ENCODE measurements at regions of chr2 and their contacts with region 1.

Region 1: DNA sequence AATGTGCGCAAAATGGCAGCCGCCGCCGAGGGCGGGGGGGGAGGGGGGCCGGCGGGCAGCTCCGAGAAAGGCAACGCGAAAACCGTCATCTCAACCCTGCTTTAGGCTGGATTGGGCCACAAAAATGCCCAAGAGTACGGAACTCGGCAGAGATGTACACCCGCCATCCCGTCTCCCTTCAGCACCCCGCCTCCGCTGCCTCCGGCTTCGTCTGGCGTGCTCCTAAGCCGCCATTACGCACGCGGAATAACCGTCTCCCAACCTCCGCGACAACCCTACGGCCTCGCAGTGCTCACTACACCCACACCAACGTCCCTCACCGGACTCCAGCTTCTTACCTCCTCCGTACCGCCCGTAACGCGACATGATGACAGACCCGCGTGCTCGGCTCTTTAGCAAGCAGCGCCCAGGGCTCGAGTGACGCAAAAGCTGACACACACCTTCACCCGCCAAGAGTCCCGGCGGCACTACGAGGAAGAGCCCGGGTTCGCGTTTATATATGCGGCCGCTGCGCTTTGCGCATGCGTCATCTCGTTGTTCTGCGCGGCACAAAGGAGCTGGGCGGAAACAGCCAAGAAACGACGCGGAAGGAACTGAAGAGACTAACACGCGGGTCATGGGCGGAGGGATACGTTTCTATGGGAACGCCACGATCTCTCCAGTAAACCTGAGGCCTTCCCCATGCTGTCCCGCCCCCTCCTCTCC is at the start of gene SRSF7:
- H3K4me3 ChIP-seq: peak within 1 kb of the TSS; percentile 84
- H3K27ac ChIP-seq: peak within 1 kb of the TSS; percentile 97
- H3K4me1 ChIP-seq: peaks cover 5% of the 10 kb centered on the region; the same call in 1 of the 2 replicates
- CTCF ChIP-seq: peak; percentile 73

Region 2: GRCh38 chr2:38508311-38509039 is 242.6 kb before region 1 on chr2:
- CTCF ChIA-PET with region 1: interaction called, 3 read pairs
- POLR2A ChIA-PET with region 1: interaction called, 14 read pairs
- H3K4me3 ChIP-seq: no peak overlapping the region
- H3K27ac ChIP-seq: peak overlapping the region; percentile 3; the same call in 1 of the 2 replicates
- H3K4me1 ChIP-seq: no peaks in the 10 kb centered on the region
- CTCF ChIP-seq: peak; percentile 64

Region 3: DNA sequence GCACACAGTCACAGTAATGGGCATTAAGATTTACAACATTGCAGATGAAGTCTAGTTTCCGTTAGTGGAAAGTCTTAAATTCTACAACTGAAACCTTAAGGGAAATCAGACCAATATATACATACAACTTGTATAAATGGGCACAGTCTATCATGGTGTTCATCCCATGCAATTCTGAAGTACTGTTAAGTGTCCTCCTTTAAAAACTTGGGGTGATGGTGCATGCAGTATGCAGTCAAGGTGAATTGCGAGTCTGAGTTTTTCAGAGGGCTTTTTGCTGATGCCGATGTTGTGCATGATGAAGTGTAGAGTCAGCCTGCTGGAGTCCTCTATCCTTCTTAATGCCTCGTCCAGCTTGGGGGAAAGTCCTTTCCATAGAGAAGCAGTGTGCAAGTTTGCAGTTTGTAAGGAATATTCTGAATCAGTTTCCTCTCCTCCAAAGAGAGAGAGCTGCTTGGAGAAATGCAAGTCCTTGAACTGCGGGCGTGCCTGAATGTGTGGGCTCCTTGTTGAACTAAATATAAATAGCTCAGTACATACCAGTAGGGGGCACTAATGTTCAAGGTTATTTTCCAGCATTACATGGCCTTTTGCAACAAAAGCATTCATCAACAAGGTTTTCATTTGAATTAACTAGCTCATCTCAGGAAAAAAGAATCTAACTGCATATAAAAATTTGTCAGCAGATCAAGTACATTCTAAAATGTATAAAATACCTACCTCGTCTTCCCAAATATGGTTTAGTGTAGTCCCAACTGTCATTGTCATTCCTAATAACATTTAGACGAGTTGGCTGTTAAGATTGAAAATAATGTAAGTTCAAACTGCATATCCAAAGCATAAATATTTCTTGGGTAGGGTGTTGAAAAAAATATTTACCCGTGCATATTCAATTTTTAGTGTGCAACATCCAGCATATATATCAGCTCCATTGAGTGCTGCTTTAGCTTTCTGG is 169.6 kb before region 1 on chr2:
- CTCF ChIA-PET with region 1: interaction called, 5 read pairs
- POLR2A ChIA-PET with region 1: interaction called, 19 read pairs
- H3K4me3 ChIP-seq: no peak overlapping the region
- H3K27ac ChIP-seq: no peak overlapping the region
- H3K4me1 ChIP-seq: peaks cover 16% of the 10 kb centered on the region
- CTCF ChIP-seq: 0 out of 2 replicates have a peak, but pooled peaks have one; percentile 19

Region 4: GRCh38 chr2:38665854-38666555 is 85.0 kb before region 1 on chr2 and contains the start of gene GALM:
- CTCF ChIA-PET with region 1: no interaction called
- POLR2A ChIA-PET with region 1: interaction called, 24 read pairs
- H3K4me3 ChIP-seq: peak within 1 kb of the TSS; percentile 69
- H3K27ac ChIP-seq: peak within 1 kb of the TSS; percentile 63
- H3K4me1 ChIP-seq: no peaks in the 10 kb centered on the region
- CTCF ChIP-seq: 0 out of 2 replicates have a peak, but pooled peaks have one; percentile 20

Region 5: DNA sequence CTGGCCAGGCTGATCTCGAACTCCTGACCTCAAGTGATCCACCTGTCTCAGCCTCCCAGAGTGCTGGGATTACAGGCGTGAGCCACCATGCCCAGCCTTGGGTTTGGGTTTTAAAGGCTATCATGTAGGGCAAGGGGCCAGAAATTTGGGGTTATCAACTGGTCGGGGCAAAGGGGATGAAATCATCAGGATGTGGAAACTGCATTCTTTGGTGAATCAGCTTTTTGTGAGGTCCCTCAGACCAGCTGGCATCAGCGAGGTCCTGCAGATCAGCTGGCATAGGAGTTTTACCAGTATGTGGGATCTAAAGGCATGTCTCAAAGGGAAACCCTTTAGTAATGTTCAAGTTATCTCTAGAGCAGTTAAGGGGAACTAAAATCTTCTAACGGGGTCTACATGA is 20.6 kb after region 1 on chr2:
- CTCF ChIA-PET with region 1: no interaction called
- POLR2A ChIA-PET with region 1: interaction called, 71 read pairs
- H3K4me3 ChIP-seq: no peak overlapping the region
- H3K27ac ChIP-seq: no peak overlapping the region
- H3K4me1 ChIP-seq: no peaks in the 10 kb centered on the region
- CTCF ChIP-seq: no peak

Region 6: DNA sequence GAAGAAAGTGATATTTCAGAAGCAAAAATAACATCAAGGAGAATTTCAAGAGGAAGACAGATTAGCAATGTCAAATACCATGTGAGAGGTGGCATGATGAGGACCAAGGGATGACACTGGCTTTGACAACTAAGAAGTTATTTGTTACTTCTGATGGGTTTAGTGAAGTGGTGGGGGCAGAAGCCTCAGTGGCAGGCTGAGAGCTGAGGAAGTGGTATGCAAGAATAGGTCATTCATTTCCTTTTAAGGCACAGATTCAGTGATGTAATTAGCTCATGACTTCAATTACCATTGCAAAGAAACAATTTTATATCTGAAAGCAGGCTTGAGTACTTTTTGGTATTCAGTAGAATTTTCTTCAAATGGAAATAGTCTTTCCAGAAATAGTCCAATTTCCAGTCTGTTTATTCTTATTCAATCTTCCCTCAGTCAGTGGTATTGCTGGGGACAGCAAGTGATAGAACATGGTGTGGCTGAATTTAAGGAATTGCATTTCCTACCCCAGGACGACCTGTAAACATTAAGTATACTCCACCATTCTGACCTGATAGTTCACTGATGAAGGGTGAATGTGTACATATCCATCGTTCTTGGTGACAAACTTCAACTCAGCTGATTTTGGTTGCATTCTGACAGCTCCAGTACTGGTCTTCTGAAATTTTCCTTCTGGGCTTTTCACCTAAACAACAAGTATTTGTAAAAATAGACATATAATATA is 55.1 kb after region 1 on chr2:
- CTCF ChIA-PET with region 1: no interaction called
- POLR2A ChIA-PET with region 1: interaction called, 19 read pairs
- H3K4me3 ChIP-seq: no peak overlapping the region
- H3K27ac ChIP-seq: no peak overlapping the region
- H3K4me1 ChIP-seq: no peaks in the 10 kb centered on the region
- CTCF ChIP-seq: no peak

Region 7: DNA sequence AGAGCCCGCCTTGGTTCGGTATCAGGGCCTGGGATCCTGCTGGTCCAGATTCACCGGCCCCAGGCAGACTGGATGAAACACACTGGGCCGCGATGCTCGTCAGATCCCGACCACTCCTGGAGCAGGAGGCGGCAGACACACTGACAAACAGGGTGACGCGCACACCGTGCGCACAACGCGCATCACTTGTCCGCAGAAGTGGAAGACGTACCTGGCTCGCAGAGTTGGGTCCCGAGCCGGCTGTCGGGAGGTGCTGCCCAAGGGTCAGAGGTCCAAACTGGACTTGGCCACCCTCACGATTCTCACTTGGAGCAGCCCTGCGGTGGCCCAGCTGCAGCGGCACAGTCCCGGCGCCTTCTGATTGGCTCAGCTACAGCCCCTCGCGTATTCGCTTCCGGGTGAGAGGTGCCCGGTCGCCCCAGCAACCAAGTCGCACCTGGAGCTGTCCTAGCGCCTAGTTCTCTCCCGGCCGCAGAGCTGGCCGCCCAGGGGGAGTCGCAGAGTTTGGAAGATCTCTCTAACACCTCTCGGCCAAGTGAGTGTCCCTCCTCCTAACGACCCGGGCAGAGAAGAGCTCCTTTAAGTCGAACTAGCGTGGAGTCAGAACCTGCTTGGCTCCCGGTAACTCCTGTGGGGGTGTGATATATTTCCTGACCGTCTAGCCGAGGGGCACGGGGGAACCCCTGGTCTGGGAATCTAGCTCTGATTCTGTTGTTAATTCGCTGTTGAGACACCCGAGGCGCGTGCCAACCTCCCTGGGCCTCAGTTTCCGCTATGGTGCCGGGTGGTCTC is 124.7 kb after region 1 on chr2 and contains the starts of genes DHX57 and MORN2:
- CTCF ChIA-PET with region 1: no interaction called
- POLR2A ChIA-PET with region 1: interaction called, 22 read pairs
- H3K4me3 ChIP-seq: peak within 1 kb of the TSS; percentile 91
- H3K27ac ChIP-seq: peak within 1 kb of the TSS; percentile 2; the same call in 1 of the 2 replicates
- H3K4me1 ChIP-seq: no peaks in the 10 kb centered on the region; the same call in 1 of the 2 replicates
- CTCF ChIP-seq: no peak; the same call in 1 of the 2 replicates

Region 8: DNA sequence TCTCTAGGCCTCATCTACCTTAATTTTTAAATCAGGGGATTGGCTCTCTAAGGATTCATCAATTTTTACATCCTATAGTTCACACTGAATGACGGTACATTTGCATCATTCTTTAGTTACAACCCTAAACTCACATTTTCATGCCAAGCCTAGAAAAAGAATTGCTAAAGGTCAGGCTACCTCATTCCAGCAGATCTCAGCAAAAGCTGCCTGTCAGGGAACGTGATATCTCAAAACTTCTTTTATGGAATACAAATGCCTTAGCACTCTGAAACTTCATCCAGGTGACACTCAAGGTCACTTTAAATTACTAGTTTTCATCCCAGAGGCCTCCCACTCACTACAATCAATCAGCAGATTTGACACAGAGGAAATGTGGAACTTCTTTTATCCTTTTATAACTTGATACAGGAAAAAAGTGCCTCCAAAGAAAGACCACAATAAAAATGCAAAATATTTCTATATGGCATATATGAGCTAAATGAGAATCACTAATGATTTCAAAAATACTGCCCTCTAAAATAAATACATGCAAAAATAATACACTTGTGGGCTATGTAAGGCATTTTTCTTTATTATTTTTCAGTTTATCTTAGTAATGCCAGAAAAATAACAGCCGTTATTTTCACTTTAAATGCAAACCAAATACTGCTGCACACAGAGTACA is 230.1 kb after region 1 on chr2:
- CTCF ChIA-PET with region 1: no interaction called
- POLR2A ChIA-PET with region 1: no interaction called
- H3K4me3 ChIP-seq: no peak overlapping the region
- H3K27ac ChIP-seq: no peak overlapping the region
- H3K4me1 ChIP-seq: no peaks in the 10 kb centered on the region
- CTCF ChIP-seq: no peak

Measured in HEK293 (cell line).